Upper lobe of right lung (tissue), 1 donor: ENCODE measurements at regions of chr10 and their contacts with region 1.

Region 1: GRCh38 chr10:88944813-88945212 is 7.8 kb downstream of the ACTA2 start:
- DNase-seq: no peak
- ATAC-seq: no peak
- H3K4me3 ChIP-seq: no peak overlapping the region
- H3K27ac ChIP-seq: no peak overlapping the region
- H3K4me1 ChIP-seq: no peaks in the 10 kb centered on the region
- H3K27me3 ChIP-seq: no peaks in the 10 kb centered on the region
- CTCF ChIP-seq: no peak

Region 2: GRCh38 chr10:88983206-88983605 is 38.4 kb after region 1 on chr10:
- intact Hi-C with region 1: loop called (anchors 5 kb)
- DNase-seq: no peak
- ATAC-seq: no peak
- H3K4me3 ChIP-seq: no peak overlapping the region
- H3K27ac ChIP-seq: no peak overlapping the region
- H3K4me1 ChIP-seq: peaks cover 25% of the 10 kb centered on the region
- H3K27me3 ChIP-seq: no peaks in the 10 kb centered on the region
- CTCF ChIP-seq: no peak

Region 3: DNA sequence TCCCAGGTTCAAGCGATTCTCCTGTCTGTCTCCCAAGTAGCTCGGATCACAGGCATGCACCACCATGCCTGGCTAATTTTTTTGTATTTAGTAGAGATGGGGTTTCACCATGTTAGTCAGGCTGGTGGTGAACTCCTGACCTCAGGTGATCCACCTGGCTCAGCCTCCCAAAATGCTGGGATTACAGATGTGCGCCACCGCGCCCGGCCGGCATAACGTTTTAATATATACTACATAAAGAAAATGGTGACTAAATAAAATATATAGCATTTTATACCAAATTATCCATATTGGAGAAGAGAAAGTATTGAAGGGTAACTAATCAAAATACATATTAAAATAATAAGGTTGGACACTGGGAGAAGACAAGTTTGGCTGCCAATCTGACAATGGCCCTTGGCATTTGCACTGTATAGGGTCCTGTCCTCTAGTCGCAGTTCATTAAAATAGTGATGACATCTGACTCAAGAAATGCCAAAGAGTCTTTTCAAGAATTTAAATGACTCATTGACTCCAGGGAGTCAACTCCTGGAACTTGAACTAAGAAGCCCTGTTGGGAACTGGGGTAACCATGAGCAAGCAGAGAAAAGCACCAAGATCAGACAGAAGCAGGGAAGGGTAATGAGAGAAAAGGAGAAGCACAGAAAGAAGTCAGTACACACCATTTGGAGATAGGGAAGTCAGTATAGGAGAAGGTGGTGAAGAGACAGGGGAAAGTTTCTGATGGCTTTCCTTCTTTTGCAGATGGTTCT is 171.2 kb after region 1 on chr10:
- intact Hi-C with region 1: no loop called
- DNase-seq: no peak
- ATAC-seq: peak; percentile 78
- H3K4me3 ChIP-seq: no peak overlapping the region
- H3K27ac ChIP-seq: no peak overlapping the region
- H3K4me1 ChIP-seq: peaks cover 1% of the 10 kb centered on the region
- H3K27me3 ChIP-seq: no peaks in the 10 kb centered on the region
- CTCF ChIP-seq: no peak